ENCODE measurements at regions of chr17 and their contacts with region 1.

Region 1: DNA sequence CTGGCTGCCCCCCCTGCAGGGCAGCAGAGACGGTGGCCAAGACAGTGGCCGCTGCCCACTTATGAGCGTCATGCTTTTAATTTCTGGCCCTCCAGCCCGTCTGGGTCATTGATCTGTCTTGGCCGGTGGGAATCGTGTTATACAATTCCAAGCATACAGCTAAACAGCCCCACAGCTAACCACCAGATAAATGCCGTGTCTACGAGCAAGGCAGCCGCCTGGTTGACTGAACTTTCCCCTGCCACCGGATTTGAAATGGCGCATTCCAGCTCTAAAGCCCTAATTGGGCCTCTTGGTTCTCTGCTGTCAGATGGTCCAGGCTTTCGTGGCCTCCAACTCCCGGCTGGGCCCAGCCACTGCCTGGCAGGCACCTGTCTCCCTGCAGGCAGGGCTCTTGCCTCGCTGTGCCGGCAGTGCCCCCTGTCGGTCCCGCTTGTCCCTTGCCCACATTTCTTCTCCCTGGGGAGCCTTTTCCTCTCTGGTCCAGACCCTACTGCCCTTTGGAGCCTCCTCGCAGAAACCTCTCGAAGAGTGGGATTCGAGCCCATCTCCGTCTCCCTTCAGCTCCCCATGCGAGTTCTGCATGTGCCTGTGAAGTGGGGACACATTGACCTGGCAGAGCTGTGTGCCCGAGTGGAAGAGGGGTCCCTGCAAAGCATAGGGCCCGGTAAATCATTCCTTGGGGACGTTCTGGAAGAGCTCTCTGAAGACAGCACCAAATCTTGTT is 1.8 kb upstream of the RBFOX3 start:
- DNase-seq: peak in 1 of 3 donors; percentile 60
- ATAC-seq: no peak
- H3K4me3 ChIP-seq: no peak overlapping the region
- H3K27ac ChIP-seq: no peak overlapping the region
- H3K4me1 ChIP-seq: no peaks in the 10 kb centered on the region
- H3K27me3 ChIP-seq: no peaks in the 10 kb centered on the region

Region 2: GRCh38 chr17:79444198-79444597 is 168.4 kb before region 1 on chr17:
- intact Hi-C with region 1: loop called in 1 of 4 experiments (anchors 10 kb)
- DNase-seq: peak in 1 of 3 donors; percentile 6
- ATAC-seq: no peak
- H3K4me3 ChIP-seq: no peak overlapping the region
- H3K27ac ChIP-seq: no peak overlapping the region
- H3K4me1 ChIP-seq: no peaks in the 10 kb centered on the region
- H3K27me3 ChIP-seq: no peaks in the 10 kb centered on the region